A549 (cell line): ENCODE measurements at regions of chr17 and their contacts with region 1.

Region 1: GRCh38 chr17:75034236-75034908 is 12.4 kb downstream of the ATP5PD start:
- DNase-seq: peak; percentile 81 to 97
- ATAC-seq: peak; percentile 57 to 71
- H3K4me3 ChIP-seq: peak overlapping the region; percentile 73
- H3K27ac ChIP-seq: peak overlapping the region; percentile 97
- H3K4me1 ChIP-seq: peaks cover 30% of the 10 kb centered on the region
- CTCF ChIP-seq: no peak
- EP300 ChIP-seq: no peak
- POLR2A ChIP-seq: no peak
- RAD21 ChIP-seq: no peak; a peak in 1 of 5 replicates

Region 2: GRCh38 chr17:74898376-74898946 is 135.9 kb before region 1 on chr17:
- CTCF ChIA-PET with region 1: no interaction called
- POLR2A ChIA-PET with region 1: no interaction called
- DNase-seq: no peak
- ATAC-seq: no peak
- H3K4me3 ChIP-seq: no peak overlapping the region
- H3K27ac ChIP-seq: no peak overlapping the region
- H3K4me1 ChIP-seq: peaks cover under 1% of the 10 kb centered on the region; the same call in 1 of the 3 replicates
- CTCF ChIP-seq: no peak
- EP300 ChIP-seq: no peak
- POLR2A ChIP-seq: no peak
- RAD21 ChIP-seq: no peak

Region 3: DNA sequence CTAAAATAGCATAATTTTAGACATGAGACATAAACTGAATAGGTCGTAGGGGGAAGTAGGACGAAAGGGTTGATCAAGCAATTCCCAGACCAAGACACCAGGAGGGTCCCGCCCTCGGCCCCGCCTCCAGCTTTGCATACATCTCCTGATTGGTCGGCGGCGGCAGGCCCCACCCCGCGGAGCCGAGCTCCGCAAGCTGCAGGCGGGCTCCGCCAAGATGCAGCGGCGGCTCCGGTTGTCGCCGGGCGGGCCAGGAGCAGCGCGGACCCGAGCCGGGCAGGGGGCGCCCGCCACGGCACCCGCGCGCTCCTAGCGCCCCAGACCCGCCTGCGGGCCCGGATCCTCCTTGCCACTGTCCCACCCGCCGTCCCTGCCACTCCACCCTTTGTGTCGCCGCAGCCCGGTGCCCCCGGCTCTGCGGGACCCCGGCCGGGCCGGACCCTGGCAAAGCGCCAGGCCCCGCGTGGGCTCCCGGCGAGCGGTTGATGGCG is 46.9 kb before region 1 on chr17 and contains the start of gene CDR2L:
- CTCF ChIA-PET with region 1: interaction called, 18 read pairs
- POLR2A ChIA-PET with region 1: interaction called, 30 read pairs
- DNase-seq: peak; percentile 94
- ATAC-seq: peak; percentile 82 to 87
- H3K4me3 ChIP-seq: peak within 1 kb of the TSS; percentile 80
- H3K27ac ChIP-seq: peak within 1 kb of the TSS; percentile 94 to 95
- H3K4me1 ChIP-seq: peaks cover 53% of the 10 kb centered on the region
- CTCF ChIP-seq: no peak
- EP300 ChIP-seq: no peak
- POLR2A ChIP-seq: peak; percentile 95
- RAD21 ChIP-seq: no peak
- polyA plus RNA-seq, gene CDR2L: 18.0 and 18.5 TPM in 2 replicates

Region 4: GRCh38 chr17:75059369-75060345 is 25.3 kb after region 1 on chr17:
- CTCF ChIA-PET with region 1: interaction called, 27 read pairs
- POLR2A ChIA-PET with region 1: no interaction called
- DNase-seq: peak in 1 of 2 experiments; percentile 70
- ATAC-seq: peak; percentile 77 to 85
- H3K4me3 ChIP-seq: no peak overlapping the region
- H3K27ac ChIP-seq: no peak overlapping the region
- H3K4me1 ChIP-seq: no peaks in the 10 kb centered on the region
- CTCF ChIP-seq: peak; percentile 62
- EP300 ChIP-seq: no peak
- POLR2A ChIP-seq: no peak
- RAD21 ChIP-seq: peak; percentile 62 to 71

Region 5: DNA sequence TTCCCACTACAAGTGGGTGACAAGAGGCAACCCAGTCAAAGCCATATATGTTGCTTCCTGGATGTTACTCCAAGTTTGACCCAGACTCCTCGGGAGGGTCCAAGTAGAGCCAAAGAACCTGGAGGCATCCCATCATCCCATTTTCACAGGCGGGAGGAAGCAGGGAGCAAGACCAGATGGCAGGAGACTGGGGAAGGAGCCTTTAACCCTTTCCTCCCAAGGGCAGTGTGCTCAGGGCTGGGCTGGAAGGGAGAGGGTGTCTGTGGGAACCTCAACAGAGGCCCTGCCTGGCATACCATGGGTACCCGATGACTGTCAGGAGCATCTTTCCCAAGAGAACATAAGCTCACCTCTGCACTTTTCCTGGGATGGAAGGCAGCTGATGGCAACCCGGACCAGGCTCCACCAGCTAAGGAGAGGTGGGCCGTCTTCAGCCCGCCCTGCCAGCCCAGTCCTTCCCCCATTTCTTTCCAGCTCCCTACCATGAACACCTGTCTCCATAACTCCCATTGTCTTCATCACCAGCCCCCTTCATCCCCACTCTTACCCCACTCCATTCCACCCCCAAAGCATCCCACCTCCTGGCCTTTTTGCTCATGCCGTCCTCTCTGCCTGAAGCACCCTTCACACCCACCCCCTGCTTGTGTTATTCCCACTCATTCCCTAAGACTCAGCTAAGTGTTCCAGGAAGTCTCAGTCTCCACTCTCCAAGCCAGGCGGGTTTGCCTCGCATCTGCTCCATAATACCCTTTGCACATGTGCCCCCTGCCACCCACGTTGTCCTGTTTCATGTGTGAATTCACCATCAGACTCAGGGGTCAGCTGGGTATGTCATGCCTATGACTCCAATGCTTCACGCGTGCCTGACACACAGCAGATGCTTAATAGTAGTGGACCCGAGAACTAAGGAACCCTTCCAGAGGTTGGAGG is 47.5 kb after region 1 on chr17:
- CTCF ChIA-PET with region 1: no interaction called
- POLR2A ChIA-PET with region 1: no interaction called
- DNase-seq: no peak
- ATAC-seq: no peak
- H3K4me3 ChIP-seq: no peak overlapping the region
- H3K27ac ChIP-seq: peak overlapping the region in 1 of 2 experiments; percentile 51; a peak in 3 of 6 replicates
- H3K4me1 ChIP-seq: peaks cover 63% of the 10 kb centered on the region
- CTCF ChIP-seq: no peak
- EP300 ChIP-seq: no peak
- POLR2A ChIP-seq: no peak
- RAD21 ChIP-seq: no peak

Region 6: GRCh38 chr17:75124041-75124818 is 89.9 kb after region 1 on chr17:
- CTCF ChIA-PET with region 1: interaction called, 5 read pairs
- POLR2A ChIA-PET with region 1: interaction called, 10 read pairs
- DNase-seq: peak; percentile 99 to 100
- ATAC-seq: peak; percentile 93
- H3K4me3 ChIP-seq: peak overlapping the region; percentile 31
- H3K27ac ChIP-seq: peak overlapping the region; percentile 92 to 97
- H3K4me1 ChIP-seq: peaks cover 61% of the 10 kb centered on the region
- CTCF ChIP-seq: no peak; the same call in 2 of the 3 replicates
- EP300 ChIP-seq: peak; percentile 30 to 80; a peak in 3 of 5 replicates
- POLR2A ChIP-seq: peak; percentile 62
- RAD21 ChIP-seq: peak; percentile 30 to 39; a peak in 4 of 5 replicates